MCF 10A (cell line): ENCODE measurements at regions of chr1 and their contacts with region 1.

Region 1: DNA sequence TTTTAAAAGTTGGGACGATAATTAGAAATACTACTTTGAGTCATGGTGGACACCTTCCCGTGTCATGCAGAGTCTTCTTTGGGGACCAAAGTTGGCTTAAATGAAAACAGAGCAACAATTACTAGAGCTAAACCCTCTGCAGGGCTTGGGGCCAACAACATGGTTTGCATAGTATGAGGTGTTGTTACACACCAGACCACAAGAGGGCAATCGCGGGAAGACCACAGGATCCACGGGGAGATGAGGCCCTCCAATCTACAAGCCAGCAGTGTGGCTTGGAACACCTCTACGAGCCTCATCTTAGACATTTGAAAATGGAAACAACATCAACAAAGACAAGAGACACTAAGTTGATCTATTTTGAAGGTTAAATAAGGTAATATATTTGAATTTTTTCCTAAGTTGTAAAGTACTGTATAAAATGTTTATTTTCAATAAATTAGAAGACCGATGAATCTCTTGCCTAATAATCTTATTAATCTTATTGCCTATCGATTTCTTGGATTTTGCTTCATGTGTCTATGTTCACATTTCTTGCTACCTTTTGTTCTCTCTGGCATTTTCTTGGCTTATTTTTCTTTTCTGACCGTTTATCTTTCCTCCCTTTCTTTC is 8.2 kb upstream of the SMCP start:
- DNase-seq: peak; percentile 91
- H3K4me3 Mint-ChIP-seq: no peak overlapping the region
- H3K27ac Mint-ChIP-seq: no peak overlapping the region
- H3K4me1 Mint-ChIP-seq: peaks cover 20% of the 10 kb centered on the region
- H3K27me3 Mint-ChIP-seq: no peaks in the 10 kb centered on the region
- CTCF ChIP-seq: peak; percentile 95

Region 2: GRCh38 chr1:152752217-152752616 is 117.7 kb before region 1 on chr1:
- CTCF ChIA-PET with region 1: interaction called, 13 read pairs
- POLR2A ChIA-PET with region 1: interaction called, 3 read pairs
- intact Hi-C with region 1: no loop called
- DNase-seq: peak; percentile 74
- H3K4me3 Mint-ChIP-seq: no peak overlapping the region
- H3K27ac Mint-ChIP-seq: no peak overlapping the region
- H3K4me1 Mint-ChIP-seq: peaks cover 12% of the 10 kb centered on the region
- H3K27me3 Mint-ChIP-seq: no peaks in the 10 kb centered on the region
- CTCF ChIP-seq: no peak

Region 3: GRCh38 chr1:152884966-152885624 is 15.2 kb after region 1 on chr1:
- CTCF ChIA-PET with region 1: interaction called, 37 read pairs
- POLR2A ChIA-PET with region 1: interaction called, 3 read pairs
- intact Hi-C with region 1: no loop called
- DNase-seq: peak; percentile 90
- H3K4me3 Mint-ChIP-seq: no peak overlapping the region
- H3K27ac Mint-ChIP-seq: peak overlapping the region; percentile 25
- H3K4me1 Mint-ChIP-seq: peaks cover 60% of the 10 kb centered on the region
- H3K27me3 Mint-ChIP-seq: no peaks in the 10 kb centered on the region
- CTCF ChIP-seq: no peak

Region 4: GRCh38 chr1:152926091-152926490 is 56.2 kb after region 1 on chr1:
- CTCF ChIA-PET with region 1: interaction called, 186 read pairs
- POLR2A ChIA-PET with region 1: interaction called, 7 read pairs
- intact Hi-C with region 1: loop called (anchors 1 kb)
- DNase-seq: peak; percentile 82
- H3K4me3 Mint-ChIP-seq: no peak overlapping the region
- H3K27ac Mint-ChIP-seq: no peak overlapping the region
- H3K4me1 Mint-ChIP-seq: peaks cover 11% of the 10 kb centered on the region
- H3K27me3 Mint-ChIP-seq: no peaks in the 10 kb centered on the region
- CTCF ChIP-seq: peak; percentile 98

Region 5: GRCh38 chr1:153180556-153180955 is 310.6 kb after region 1 on chr1:
- CTCF ChIA-PET with region 1: interaction called, 28 read pairs
- POLR2A ChIA-PET with region 1: no interaction called
- intact Hi-C with region 1: no loop called
- DNase-seq: no peak
- H3K4me3 Mint-ChIP-seq: no peak overlapping the region
- H3K27ac Mint-ChIP-seq: no peak overlapping the region
- H3K4me1 Mint-ChIP-seq: no peaks in the 10 kb centered on the region
- H3K27me3 Mint-ChIP-seq: no peaks in the 10 kb centered on the region
- CTCF ChIP-seq: peak; percentile 13

Region 6: GRCh38 chr1:153288634-153289275 is 418.8 kb after region 1 on chr1:
- CTCF ChIA-PET with region 1: interaction called, 6 read pairs
- POLR2A ChIA-PET with region 1: no interaction called
- intact Hi-C with region 1: loop called (anchors 10 kb)
- DNase-seq: peak; percentile 86
- H3K4me3 Mint-ChIP-seq: no peak overlapping the region
- H3K27ac Mint-ChIP-seq: no peak overlapping the region
- H3K4me1 Mint-ChIP-seq: no peaks in the 10 kb centered on the region
- H3K27me3 Mint-ChIP-seq: peaks cover 13% of the 10 kb centered on the region
- CTCF ChIP-seq: peak; percentile 69